ENCODE measurements at regions of chr17 and their contacts with region 1.

Region 1: DNA sequence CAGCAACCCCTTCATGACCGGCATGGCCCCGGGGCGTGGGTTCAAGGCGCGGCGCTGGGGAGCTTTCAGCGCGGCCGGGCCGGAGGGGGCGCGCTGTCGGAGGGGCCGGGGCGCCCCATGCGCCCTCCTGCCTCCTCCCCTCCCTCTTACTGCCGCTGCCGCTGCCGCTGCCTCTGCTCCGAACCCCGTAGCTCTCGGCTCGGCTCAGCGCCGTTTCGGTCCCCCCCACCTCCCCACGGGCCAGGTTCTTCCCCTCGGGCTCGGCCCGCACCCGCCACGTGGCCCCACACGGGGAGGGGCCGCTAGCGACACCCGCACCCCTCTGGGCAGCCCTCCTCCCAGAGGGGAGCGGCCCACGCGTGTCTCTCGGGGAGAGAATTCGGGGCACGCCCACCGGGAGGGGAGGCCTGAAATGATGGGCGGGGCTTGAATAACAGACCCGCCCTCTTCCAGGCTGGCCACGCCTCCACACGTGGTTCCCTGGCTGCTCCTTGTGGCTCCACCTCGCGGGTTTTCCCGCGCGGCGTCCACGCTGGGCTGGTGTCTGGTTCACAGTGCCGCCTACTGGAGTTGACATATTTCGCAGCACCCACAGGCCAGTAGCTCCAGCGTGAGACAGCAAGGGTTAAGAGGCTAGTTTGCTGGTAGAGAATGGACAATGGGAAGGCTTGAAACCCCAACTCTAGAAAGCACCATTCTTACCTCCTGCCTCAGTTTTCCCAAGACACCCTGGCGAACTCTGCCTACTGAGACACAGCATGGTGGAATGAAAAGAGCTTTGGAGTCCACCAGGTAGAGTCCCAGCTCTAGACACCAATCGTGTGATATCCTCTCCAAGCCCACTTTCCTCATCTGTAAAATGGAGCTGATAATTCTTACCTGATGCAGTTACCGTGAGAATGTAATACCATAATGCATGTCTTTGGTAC is at the start of gene KCNH4:
- DNase-seq: peak in 1 of 2 experiments; percentile 92
- H3K4me3 ChIP-seq: peak within 1 kb of the TSS; percentile 40 to 73 (median 51)
- H3K27ac ChIP-seq: no peak within 1 kb of the TSS
- H3K4me1 ChIP-seq: peaks cover 0 to 17% (median 15%) of the 10 kb centered on the region in 4 experiments; a peak in 5 of 7 replicates
- H3K27me3 ChIP-seq: peaks cover 7 to 57% (median 41%) of the 10 kb centered on the region in 4 experiments
- CTCF ChIP-seq: peak; percentile 45 to 62 (median 45)
- EP300 ChIP-seq: no peak
- POLR2A ChIP-seq: no peak
- RAD21 ChIP-seq: peak; percentile 40 to 53; a peak in 3 of 4 replicates
- total RNA-seq, gene KCNH4: 0.47 and 0.59 TPM in 2 replicates

Region 2: GRCh38 chr17:42163113-42163512 is 18.1 kb before region 1 on chr17:
- CTCF ChIA-PET with region 1: interaction called, 34 read pairs
- POLR2A ChIA-PET with region 1: no interaction called
- DNase-seq: peak in 1 of 2 experiments; percentile 94
- H3K4me3 ChIP-seq: no peak overlapping the region
- H3K27ac ChIP-seq: no peak overlapping the region
- H3K4me1 ChIP-seq: no peaks in the 10 kb centered on the region; a peak in 2 of 7 replicates
- H3K27me3 ChIP-seq: no peaks in the 10 kb centered on the region
- CTCF ChIP-seq: peak; percentile 84 to 96 (median 95)
- EP300 ChIP-seq: no peak
- POLR2A ChIP-seq: no peak
- RAD21 ChIP-seq: peak; percentile 64 to 73

Region 3: DNA sequence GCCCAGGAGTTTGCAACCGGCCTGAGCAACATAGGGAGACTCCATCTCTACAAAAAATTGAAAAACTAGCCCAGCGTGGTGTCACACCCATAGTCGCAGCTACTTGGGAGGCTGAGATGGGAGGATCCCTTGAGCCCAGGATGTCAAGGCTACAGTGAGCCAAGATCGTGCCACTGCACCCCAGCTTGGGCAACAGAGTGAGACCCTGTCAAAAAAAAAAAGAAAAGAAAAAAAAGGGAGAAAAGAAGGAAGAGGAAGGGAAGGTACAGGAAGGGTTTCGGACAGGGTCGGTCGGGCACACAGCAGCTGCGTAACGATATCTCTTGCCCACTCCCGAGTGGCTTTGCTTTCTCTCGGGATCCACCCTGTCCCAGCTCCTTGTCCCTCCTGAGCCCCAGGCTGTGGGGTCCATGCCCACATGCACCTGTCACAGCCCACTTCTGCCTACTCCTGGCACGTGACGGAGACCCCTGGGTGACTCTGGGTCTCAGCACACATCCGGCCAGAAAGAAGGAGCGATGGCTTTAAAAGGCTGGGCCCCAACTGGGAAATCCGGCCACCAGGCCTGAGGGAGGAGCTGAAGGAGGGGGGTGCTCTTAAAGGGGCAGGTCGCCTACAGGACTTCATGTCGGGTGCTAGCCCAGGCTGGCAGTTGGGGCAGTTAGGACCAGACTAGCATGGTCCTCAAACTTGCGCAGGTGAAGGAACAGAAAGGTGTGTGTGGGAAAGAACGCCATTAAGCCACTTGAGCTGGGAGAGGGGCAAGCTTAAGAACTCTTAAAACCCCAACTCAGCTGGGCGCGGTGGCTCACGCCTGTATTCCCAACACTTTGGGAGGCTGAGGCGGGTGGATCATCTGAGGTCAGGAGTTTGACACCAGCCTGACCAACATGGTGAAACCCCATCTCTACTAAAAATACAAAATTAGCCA is 13.0 kb after region 1 on chr17 and contains the start of gene GHDC:
- CTCF ChIA-PET with region 1: interaction called, 13 read pairs
- POLR2A ChIA-PET with region 1: interaction called, 7 read pairs
- DNase-seq: peak in 1 of 2 experiments; percentile 74
- H3K4me3 ChIP-seq: peak within 1 kb of the TSS in 3 of 4 experiments; percentile 16 to 52 (median 19); a peak in 5 of 8 replicates
- H3K27ac ChIP-seq: no peak within 1 kb of the TSS
- H3K4me1 ChIP-seq: peaks cover 0 to 4% (median 3%) of the 10 kb centered on the region in 4 experiments; a peak in 5 of 7 replicates
- H3K27me3 ChIP-seq: no peaks in the 10 kb centered on the region
- CTCF ChIP-seq: no peak
- EP300 ChIP-seq: no peak
- POLR2A ChIP-seq: no peak
- RAD21 ChIP-seq: no peak
- total RNA-seq, gene GHDC: 7.1 and 7.4 TPM in 2 replicates

Measured in H1 (cell line).